Transverse colon (tissue), 4 donors: ENCODE measurements at regions of chr20 and their contacts with region 1.

Region 1: GRCh38 chr20:64111841-64112641 is 4.7 kb upstream of the NPBWR2 start:
- DNase-seq: peak; percentile 3
- H3K4me3 ChIP-seq: no peak overlapping the region
- H3K27ac ChIP-seq: no peak overlapping the region
- H3K4me1 ChIP-seq: no peaks in the 10 kb centered on the region
- H3K27me3 ChIP-seq: peaks cover 2% of the 10 kb centered on the region
- CTCF ChIP-seq: no peak
- EP300 ChIP-seq: no peak
- POLR2A ChIP-seq: no peak

Region 2: DNA sequence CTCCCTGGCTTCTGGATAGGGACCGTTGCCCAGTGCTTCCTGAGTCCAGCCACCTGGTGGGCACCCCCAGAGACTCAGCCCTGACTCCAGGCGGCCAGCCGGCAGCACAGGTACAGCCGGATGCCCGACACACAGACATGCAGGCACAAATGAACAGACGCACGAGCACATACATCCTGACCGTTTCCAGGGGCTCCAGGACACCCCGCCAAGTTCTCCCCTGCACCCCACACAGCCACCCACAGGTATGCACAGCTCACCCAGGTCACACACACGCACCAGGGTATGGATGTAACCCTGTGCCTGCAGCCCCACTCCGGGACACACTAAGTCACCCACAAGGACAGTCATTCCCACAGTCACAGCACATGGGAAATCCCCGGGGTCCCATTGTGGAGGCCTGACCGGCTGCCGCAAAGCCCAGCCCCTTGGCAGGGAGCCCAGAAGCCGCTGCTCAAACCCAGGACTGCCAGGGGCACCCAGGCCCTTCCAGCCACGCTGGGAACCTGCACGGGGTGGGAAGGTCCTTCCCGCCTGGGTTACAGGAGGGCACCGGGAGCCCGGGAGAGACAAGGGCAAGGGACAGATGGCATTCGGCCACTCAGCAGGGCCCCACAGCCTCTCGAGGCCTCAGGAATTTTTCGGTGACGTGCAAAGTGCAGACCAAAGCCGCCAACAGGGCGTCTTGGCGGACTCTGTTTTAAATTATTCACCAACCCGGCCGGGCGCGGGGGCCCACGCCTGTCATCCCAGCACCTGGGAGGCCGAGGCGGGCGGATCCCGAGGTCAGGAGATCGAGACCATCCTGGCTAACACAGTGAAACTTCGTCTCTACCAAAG is 629.0 kb before region 1 on chr20:
- in situ Hi-C with region 1: no loop called
- intact Hi-C with region 1: no loop called
- DNase-seq: no peak
- H3K4me3 ChIP-seq: no peak overlapping the region
- H3K27ac ChIP-seq: no peak overlapping the region
- H3K4me1 ChIP-seq: no peaks in the 10 kb centered on the region
- H3K27me3 ChIP-seq: peaks cover 88% of the 10 kb centered on the region
- CTCF ChIP-seq: no peak
- EP300 ChIP-seq: no peak
- POLR2A ChIP-seq: no peak

Region 3: GRCh38 chr20:64001607-64002011 is 110.4 kb before region 1 on chr20:
- in situ Hi-C with region 1: no loop called
- intact Hi-C with region 1: no loop called
- DNase-seq: no peak
- H3K4me3 ChIP-seq: no peak overlapping the region
- H3K27ac ChIP-seq: no peak overlapping the region
- H3K4me1 ChIP-seq: no peaks in the 10 kb centered on the region
- H3K27me3 ChIP-seq: no peaks in the 10 kb centered on the region
- CTCF ChIP-seq: no peak
- EP300 ChIP-seq: no peak
- POLR2A ChIP-seq: no peak

Region 4: GRCh38 chr20:64038565-64039292 is 73.3 kb before region 1 on chr20:
- in situ Hi-C with region 1: no loop called
- intact Hi-C with region 1: loop called (anchors 5 kb)
- DNase-seq: peak; percentile 78
- H3K4me3 ChIP-seq: peak overlapping the region; percentile 16 to 53 (median 32)
- H3K27ac ChIP-seq: peak overlapping the region; percentile 33 to 66 (median 52)
- H3K4me1 ChIP-seq: peaks cover 16 to 34% (median 24%) of the 10 kb centered on the region in 4 donors
- H3K27me3 ChIP-seq: peaks cover 72% of the 10 kb centered on the region
- CTCF ChIP-seq: peak; percentile 61 to 83 (median 65)
- EP300 ChIP-seq: no peak
- POLR2A ChIP-seq: no peak

Region 5: DNA sequence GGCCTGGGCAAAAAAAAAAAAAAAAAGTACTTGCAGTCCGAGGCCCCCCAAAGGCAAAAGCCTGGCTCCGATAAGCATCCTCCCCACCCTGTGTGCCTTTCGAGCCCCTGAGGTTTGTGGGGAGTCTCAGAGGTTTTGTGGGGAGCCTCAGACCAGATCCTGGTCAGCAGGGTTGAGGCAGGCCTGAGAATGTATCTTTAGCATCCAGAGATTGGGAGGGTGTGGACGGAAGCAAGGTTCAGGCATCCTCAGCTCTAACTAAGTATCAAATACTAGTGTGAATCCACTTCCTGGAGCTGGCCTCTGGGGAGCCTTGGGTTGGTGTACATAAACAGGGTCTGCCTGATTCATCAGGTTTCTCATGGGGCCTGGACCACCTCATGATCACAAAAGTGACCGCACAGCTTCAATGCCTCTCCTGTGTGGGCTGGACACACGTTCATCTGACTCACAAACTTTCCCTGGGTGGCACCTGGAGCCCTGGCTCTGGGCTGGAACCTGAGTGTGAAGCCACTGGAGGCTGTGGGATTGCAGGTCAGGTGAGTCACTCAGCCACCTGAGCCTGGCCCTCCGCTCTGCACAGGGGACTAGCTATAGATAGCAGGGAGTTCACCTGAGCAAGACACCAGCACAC is 167.9 kb after region 1 on chr20:
- in situ Hi-C with region 1: no loop called
- intact Hi-C with region 1: no loop called
- DNase-seq: no peak
- H3K4me3 ChIP-seq: no peak overlapping the region
- H3K27ac ChIP-seq: no peak overlapping the region
- H3K4me1 ChIP-seq: no peaks in the 10 kb centered on the region
- H3K27me3 ChIP-seq: no peaks in the 10 kb centered on the region
- CTCF ChIP-seq: no peak
- EP300 ChIP-seq: no peak
- POLR2A ChIP-seq: no peak